Activated CD8-positive, alpha-beta T cell treated with anti-CD3 and anti-CD28 coated beads for 36 hours (primary cell): ENCODE measurements at regions of chr1 and their contacts with region 1.

Region 1: GRCh38 chr1:19101244-19101643 is 108.8 kb downstream of the UBR4 start:
- DNase-seq: no peak
- ATAC-seq: no peak
- H3K4me3 Mint-ChIP-seq: no peak overlapping the region
- H3K27ac Mint-ChIP-seq: no peak overlapping the region
- H3K4me1 Mint-ChIP-seq: no peaks in the 10 kb centered on the region
- H3K27me3 Mint-ChIP-seq: no peaks in the 10 kb centered on the region
- CTCF ChIP-seq: no peak

Region 2: DNA sequence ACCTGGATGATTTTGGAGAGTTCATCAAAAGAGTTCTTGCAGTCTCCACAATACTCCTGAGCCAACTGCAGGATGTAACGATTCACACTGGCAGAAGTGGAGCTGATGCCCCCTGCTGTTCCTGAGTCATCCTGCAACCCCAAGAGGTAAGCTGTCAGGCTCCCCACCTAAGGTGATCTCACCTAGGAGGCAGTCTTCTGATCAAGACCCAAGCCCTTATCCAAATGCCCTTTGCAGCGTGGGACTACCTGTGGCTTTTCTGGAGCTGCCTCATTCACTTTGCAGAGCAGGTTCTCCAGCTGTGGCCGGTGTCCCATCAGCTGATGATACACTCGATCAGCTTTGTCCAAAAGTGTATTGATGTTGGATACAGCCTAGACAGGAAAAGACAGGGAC is 12.5 kb after region 1 on chr1:
- CTCF ChIA-PET with region 1: interaction called, 15 read pairs
- POLR2A ChIA-PET with region 1: interaction called, 3 read pairs
- intact Hi-C with region 1: no loop called
- DNase-seq: peak; percentile 61
- ATAC-seq: peak; percentile 83
- H3K4me3 Mint-ChIP-seq: no peak overlapping the region
- H3K27ac Mint-ChIP-seq: no peak overlapping the region
- H3K4me1 Mint-ChIP-seq: no peaks in the 10 kb centered on the region
- H3K27me3 Mint-ChIP-seq: no peaks in the 10 kb centered on the region
- CTCF ChIP-seq: peak; percentile 40